HEK293 (cell line): ENCODE measurements at regions of chr11 and their contacts with region 1.

Region 1: DNA sequence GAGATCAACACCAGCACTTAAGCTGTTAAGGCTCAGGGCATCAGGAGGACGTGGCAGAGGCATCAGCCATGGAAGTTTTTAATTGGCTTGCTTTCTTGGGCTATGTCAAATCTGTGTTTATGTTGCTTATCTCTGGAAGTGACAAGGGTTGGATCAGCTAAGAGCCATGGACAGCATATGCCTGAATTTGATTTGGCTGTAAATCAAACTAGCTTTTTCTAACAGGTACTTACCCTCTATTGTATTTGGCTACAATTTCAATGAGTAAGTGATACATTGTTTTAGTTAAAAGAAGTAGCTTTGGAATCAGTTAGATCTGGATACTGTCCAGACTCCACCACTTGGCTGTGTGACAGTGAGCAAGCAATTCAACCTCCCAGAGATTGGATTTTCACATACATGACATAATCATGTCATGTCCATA is 936.6 kb downstream of the OPCML start:
- H3K4me3 ChIP-seq: no peak overlapping the region
- H3K27ac ChIP-seq: no peak overlapping the region
- H3K4me1 ChIP-seq: peaks cover 6% of the 10 kb centered on the region; the same call in 1 of the 2 replicates
- CTCF ChIP-seq: no peak

Region 2: DNA sequence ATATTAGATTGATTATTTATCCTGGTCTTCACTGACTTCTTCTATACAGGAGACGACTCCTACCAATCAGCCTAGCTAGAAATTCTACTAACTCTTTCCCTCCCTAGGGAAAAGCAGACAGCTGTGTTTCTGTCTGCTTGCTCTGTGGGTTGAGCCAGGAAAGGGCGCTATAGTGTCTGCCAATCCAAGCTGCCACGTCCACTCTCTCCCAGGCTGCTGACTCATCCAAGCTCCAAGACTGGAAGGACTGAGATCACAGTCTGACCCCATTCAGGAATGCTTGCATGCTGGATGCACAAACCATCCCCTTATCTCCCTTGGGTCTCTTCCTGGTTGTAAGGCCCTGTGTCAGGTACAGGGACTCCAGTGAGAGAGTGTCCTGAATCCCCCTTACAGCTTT is 19.0 kb before region 1 on chr11:
- CTCF ChIA-PET with region 1: no interaction called
- POLR2A ChIA-PET with region 1: no interaction called
- H3K4me3 ChIP-seq: no peak overlapping the region
- H3K27ac ChIP-seq: no peak overlapping the region
- H3K4me1 ChIP-seq: no peaks in the 10 kb centered on the region
- CTCF ChIP-seq: no peak

Region 3: DNA sequence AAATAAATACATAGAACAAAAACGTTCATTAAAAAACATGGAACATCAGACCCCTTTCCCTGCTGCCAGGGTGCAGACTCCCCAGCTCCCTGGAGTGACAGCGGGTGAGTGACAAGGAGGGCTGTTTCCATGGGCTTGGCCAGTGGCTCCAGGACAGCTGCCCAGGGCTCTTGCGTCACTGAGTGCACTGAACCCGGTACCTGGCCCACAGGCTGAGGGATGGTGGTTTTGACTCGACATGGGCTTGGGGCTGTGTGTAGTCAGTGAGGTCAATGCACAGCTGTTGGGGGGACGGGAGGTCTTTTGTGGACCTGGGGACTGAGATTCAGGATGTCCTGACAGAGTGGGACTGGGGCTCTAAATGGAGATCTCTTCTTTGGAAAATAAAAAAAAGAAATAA is 1958.4 kb after region 1 on chr11:
- CTCF ChIA-PET with region 1: no interaction called
- POLR2A ChIA-PET with region 1: interaction called, 11 read pairs
- H3K4me3 ChIP-seq: no peak overlapping the region
- H3K27ac ChIP-seq: no peak overlapping the region
- H3K4me1 ChIP-seq: no peaks in the 10 kb centered on the region
- CTCF ChIP-seq: no peak